ENCODE measurements at regions of chr20 and their contacts with region 1.

Region 1: DNA sequence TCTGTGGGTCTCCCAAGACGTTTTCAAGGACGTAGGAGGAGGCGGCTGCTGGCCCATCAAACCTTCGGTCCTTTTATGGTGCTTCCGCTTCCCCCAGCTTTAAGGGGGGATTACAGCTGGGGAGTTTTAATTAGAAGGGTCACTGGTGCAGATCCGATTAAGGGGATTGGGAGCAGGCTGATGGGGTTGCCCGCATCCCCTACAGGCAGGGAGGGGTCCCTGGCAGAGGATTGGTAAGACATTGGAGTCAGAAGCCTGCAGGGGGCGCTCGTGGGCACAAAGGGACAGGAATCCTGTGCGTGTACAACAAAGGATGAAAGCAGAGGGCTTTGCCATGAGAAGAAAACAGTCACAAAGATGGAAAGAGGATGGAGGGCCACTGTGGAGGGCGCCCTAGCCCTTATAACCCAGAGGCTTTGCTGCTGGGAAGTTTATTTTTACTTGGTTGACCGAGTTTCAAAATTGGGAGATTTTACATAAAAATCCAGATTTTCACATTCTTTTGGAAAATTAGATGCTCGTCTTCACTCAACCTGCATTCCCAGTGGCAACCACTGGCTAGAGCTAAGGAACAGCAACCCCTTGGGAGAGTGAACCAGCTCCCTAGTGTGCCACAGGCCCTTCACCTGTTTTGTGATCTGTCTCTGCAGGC is 97.9 kb downstream of the KCNB1 start:
- DNase-seq: peak; percentile 89
- H3K4me3 Mint-ChIP-seq: no peak overlapping the region
- H3K27ac Mint-ChIP-seq: no peak overlapping the region
- H3K4me1 Mint-ChIP-seq: peaks cover 8% of the 10 kb centered on the region
- H3K27me3 Mint-ChIP-seq: peaks cover 89% of the 10 kb centered on the region
- CTCF ChIP-seq: peak; percentile 96

Region 2: DNA sequence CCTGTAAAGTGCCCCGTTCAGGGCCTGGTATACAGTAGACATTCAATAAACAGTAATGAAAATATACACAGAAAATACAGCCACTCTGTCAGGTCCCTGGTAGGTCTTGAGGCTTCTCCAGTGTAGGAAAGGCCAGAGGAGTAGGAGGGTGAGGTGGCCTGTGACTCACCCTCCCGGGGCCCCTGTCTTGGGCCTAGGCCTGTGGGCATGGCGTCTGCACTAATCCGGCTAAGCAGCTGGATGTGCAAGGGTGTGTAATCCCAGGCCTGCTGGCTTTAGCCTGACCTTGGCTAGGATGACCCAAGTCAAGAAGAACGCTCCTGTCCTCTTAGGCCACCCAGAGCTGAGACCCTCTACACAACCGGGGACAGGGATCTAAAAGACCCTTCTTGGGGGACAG is 13.0 kb after region 1 on chr20:
- CTCF ChIA-PET with region 1: interaction called, 12 read pairs
- intact Hi-C with region 1: no loop called
- DNase-seq: no peak
- H3K4me3 Mint-ChIP-seq: no peak overlapping the region
- H3K27ac Mint-ChIP-seq: no peak overlapping the region
- H3K4me1 Mint-ChIP-seq: peaks cover 7% of the 10 kb centered on the region
- H3K27me3 Mint-ChIP-seq: peaks cover 85% of the 10 kb centered on the region
- CTCF ChIP-seq: no peak

Region 3: GRCh38 chr20:49452011-49452482 is 67.5 kb after region 1 on chr20:
- CTCF ChIA-PET with region 1: interaction called, 12 read pairs
- intact Hi-C with region 1: no loop called
- DNase-seq: no peak
- H3K4me3 Mint-ChIP-seq: no peak overlapping the region
- H3K27ac Mint-ChIP-seq: no peak overlapping the region
- H3K4me1 Mint-ChIP-seq: no peaks in the 10 kb centered on the region
- H3K27me3 Mint-ChIP-seq: peaks cover 90% of the 10 kb centered on the region
- CTCF ChIP-seq: no peak

Region 4: GRCh38 chr20:49603209-49603627 is 218.7 kb after region 1 on chr20:
- CTCF ChIA-PET with region 1: no interaction called
- intact Hi-C with region 1: no loop called
- DNase-seq: peak; percentile 41
- H3K4me3 Mint-ChIP-seq: no peak overlapping the region
- H3K27ac Mint-ChIP-seq: no peak overlapping the region
- H3K4me1 Mint-ChIP-seq: peaks cover 18% of the 10 kb centered on the region
- H3K27me3 Mint-ChIP-seq: peaks cover 4% of the 10 kb centered on the region
- CTCF ChIP-seq: peak; percentile 42

Measured in Calu3 (cell line).